ENCODE measurements at regions of chr1 and their contacts with region 1.

Region 1: GRCh38 chr1:205396967-205397616 is 24.8 kb downstream of the LEMD1 start:
- H3K4me3 ChIP-seq: no peak overlapping the region
- H3K27ac ChIP-seq: no peak overlapping the region
- H3K4me1 ChIP-seq: no peaks in the 10 kb centered on the region
- CTCF ChIP-seq: peak; percentile 81

Region 2: DNA sequence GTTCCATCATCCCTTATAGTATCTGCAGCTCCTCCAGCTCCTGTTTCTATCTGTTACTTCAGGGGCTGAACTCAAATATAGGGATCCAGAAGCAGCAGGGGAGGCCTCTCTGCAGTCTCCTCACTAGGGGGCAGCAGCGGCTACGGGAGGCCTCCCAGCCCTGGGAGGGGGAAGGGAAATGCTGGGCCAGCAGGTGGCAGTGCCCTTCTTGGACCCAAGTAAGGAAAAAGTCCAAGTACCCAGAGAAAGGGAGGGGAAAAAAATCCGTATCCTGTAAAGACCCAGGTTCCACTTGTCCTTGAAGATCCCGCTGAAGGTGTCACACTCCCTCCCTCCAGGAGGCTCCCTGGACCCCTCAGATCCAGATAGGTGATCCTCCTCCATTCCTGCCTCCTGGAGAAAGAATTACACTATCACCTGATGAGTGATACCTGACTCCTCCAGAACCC is 61.4 kb before region 1 on chr1:
- CTCF ChIA-PET with region 1: interaction called, 14 read pairs
- POLR2A ChIA-PET with region 1: no interaction called
- H3K4me3 ChIP-seq: no peak overlapping the region
- H3K27ac ChIP-seq: no peak overlapping the region
- H3K4me1 ChIP-seq: 0 out of 2 replicates have a peak, but pooled peaks cover 2% of the 10 kb centered on the region
- CTCF ChIP-seq: peak; percentile 97

Region 3: DNA sequence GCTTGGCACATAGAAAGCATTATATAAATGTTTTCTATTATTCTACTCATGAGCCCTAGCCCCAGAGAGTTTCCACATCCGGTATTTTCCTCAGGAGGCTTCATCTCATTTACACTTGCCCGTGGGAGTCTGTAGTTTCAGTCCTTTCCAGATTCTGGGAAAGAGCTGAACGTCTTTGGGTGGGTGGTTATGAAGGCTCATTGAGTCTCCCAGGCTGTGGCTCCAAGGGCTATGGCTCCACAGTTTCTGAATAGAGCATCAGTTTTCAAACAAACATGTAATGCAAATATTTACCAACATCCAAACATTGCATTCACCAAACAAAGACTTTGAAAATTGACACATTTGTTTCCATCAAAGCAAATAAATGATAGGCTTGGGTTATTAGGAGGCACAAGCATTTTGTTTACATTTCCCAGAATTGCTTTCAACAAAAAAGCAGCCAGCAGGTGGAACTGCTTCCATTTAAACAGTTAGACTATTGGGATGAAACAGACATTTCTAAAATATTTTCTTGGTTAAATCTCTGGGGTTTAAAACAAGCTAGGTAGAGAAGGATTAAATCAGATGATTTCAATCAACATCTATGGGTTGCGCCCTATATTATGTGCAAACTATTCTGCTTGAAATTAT is 26.0 kb after region 1 on chr1:
- CTCF ChIA-PET with region 1: interaction called, 10 read pairs
- POLR2A ChIA-PET with region 1: no interaction called
- H3K4me3 ChIP-seq: no peak overlapping the region
- H3K27ac ChIP-seq: no peak overlapping the region
- H3K4me1 ChIP-seq: peaks cover 5% of the 10 kb centered on the region; the same call in 1 of the 2 replicates
- CTCF ChIP-seq: no peak

Region 4: DNA sequence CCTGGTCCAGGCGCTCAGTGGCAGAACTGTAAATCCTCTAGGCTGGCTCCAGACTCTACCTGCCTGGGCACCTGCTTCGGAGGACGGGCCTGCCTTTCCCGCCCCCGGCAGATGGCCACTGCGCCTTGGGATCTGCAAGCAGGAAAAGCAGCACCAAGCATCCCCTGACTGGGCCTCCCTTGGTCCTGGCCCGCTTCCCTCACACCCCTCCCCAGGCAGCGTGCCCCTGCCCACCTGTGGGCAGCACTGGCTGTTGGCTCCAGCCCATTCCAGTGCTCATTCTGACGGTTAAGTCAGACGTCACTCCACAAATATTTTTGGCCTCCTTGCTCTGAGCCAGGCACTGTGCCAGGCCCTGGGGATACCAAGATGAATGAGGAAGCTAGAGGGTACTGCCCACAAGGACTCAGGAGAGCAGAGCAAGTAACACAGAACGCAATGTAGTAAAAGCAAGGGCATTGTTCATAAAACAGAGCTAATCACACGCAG is 80.7 kb after region 1 on chr1:
- CTCF ChIA-PET with region 1: interaction called, 17 read pairs
- POLR2A ChIA-PET with region 1: no interaction called
- H3K4me3 ChIP-seq: no peak overlapping the region
- H3K27ac ChIP-seq: no peak overlapping the region
- H3K4me1 ChIP-seq: no peaks in the 10 kb centered on the region
- CTCF ChIP-seq: no peak

Measured in HEK293 (cell line).